ENCODE measurements at regions of chr17 and their contacts with region 1.

Region 1: DNA sequence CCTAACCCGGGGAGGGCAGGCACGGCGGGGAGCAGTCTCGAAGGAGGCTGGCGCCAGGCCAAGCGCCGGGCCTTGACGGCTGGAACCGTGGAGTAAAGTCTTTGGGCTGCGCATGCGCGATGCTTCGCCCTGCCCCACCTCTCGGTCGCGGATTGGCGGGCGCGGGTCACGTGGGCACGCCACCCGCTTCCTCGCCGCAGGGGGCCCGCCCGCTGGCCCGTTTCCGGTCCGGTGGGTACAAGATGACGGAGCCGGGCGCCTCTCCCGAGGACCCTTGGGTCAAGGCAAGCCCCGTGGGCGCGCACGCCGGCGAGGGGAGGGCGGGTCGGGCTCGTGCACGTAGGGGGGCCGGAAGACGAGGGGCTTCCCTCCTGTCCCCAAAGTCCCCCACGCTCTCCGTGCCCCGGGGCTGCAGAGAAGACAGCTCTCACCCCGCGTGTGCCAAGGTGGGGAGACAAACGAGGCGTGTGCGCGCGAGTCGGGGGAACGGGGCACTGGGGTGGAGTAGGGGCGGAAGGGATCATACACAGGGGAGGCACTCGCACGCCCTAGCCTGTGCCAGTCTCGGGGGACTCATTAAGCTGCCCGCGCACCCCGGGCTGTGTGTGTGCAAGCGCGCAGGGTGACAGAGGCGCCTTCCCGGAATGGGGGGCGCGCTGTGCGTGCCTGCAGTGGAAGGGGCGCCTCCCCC is at the start of gene MLX:
- DNase-seq: peak; percentile 89
- H3K4me3 Mint-ChIP-seq: peak within 1 kb of the TSS; percentile 86
- H3K27ac Mint-ChIP-seq: peak within 1 kb of the TSS; percentile 80
- H3K4me1 Mint-ChIP-seq: peaks cover 33% of the 10 kb centered on the region
- H3K27me3 Mint-ChIP-seq: no peaks in the 10 kb centered on the region
- total RNA-seq, gene MLX: 54.8 and 60.0 TPM in 2 replicates

Region 2: DNA sequence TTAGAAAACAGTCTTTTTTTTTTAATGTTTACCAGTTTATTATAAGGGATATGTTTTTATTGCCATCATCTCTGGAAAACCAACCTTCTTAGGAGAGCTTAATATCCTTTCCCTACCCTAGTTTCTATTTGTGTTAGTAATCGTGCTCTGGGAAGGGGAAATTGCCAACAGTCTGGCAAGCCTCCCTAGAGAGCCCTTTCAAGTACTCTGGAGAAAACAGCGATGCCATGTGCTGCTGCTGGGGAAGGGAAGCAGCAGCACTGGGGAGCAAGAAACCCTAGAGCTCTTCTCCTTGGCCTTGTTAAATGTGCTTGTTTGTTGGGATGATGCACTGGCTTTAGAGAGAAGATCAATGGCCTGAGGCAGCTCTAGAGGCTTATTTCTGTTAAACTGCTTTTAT is 31.9 kb after region 1 on chr17:
- intact Hi-C with region 1: no loop called
- DNase-seq: no peak
- H3K4me3 Mint-ChIP-seq: no peak overlapping the region
- H3K27ac Mint-ChIP-seq: no peak overlapping the region
- H3K4me1 Mint-ChIP-seq: peaks cover 9% of the 10 kb centered on the region
- H3K27me3 Mint-ChIP-seq: no peaks in the 10 kb centered on the region

Region 3: GRCh38 chr17:42609182-42609813 is 42.3 kb after region 1 on chr17 and contains the starts of genes RETREG3 and TUBG1:
- intact Hi-C with region 1: loop called (anchors 2 kb)
- DNase-seq: peak; percentile 100
- H3K4me3 Mint-ChIP-seq: peak within 1 kb of the TSS; percentile 98
- H3K27ac Mint-ChIP-seq: peak within 1 kb of the TSS; percentile 92
- H3K4me1 Mint-ChIP-seq: peaks cover 19% of the 10 kb centered on the region
- H3K27me3 Mint-ChIP-seq: no peaks in the 10 kb centered on the region
- total RNA-seq, gene RETREG3: 37.7 and 39.0 TPM in 2 replicates
- total RNA-seq, gene TUBG1: 85.5 and 94.9 TPM in 2 replicates

Region 4: GRCh38 chr17:42740699-42741098 is 173.7 kb after region 1 on chr17:
- intact Hi-C with region 1: no loop called
- DNase-seq: no peak
- H3K4me3 Mint-ChIP-seq: no peak overlapping the region
- H3K27ac Mint-ChIP-seq: no peak overlapping the region
- H3K4me1 Mint-ChIP-seq: peaks cover 18% of the 10 kb centered on the region
- H3K27me3 Mint-ChIP-seq: peaks cover 5% of the 10 kb centered on the region

Measured in activated T-helper 2 cell treated with anti-CD3 and anti-CD28 coated beads, Interferon-gamma antibody, Interleukin-2, Interleukin-4, amounts not matched to agents 10 μg/mL and 5 μg/mL and 100 μg/mL, durations not matched to agents 14 hours and 24 hours and 36 hours (primary cell).